HepG2 (cell line): ENCODE measurements at regions of chr2 and their contacts with region 1.

Region 1: GRCh38 chr2:17470855-17471641 is 47.2 kb downstream of the RAD51AP2 start:
- DNase-seq: peak; percentile 71
- ATAC-seq: peak; percentile 99
- H3K4me3 ChIP-seq: no peak overlapping the region
- H3K27ac ChIP-seq: no peak overlapping the region
- H3K4me1 ChIP-seq: peaks cover 6% of the 10 kb centered on the region; the same call in 1 of the 2 replicates
- H3K27me3 ChIP-seq: no peaks in the 10 kb centered on the region
- CTCF ChIP-seq: peak; percentile 88
- EP300 ChIP-seq: no peak
- POLR2A ChIP-seq: no peak
- RAD21 ChIP-seq: peak; percentile 87

Region 2: DNA sequence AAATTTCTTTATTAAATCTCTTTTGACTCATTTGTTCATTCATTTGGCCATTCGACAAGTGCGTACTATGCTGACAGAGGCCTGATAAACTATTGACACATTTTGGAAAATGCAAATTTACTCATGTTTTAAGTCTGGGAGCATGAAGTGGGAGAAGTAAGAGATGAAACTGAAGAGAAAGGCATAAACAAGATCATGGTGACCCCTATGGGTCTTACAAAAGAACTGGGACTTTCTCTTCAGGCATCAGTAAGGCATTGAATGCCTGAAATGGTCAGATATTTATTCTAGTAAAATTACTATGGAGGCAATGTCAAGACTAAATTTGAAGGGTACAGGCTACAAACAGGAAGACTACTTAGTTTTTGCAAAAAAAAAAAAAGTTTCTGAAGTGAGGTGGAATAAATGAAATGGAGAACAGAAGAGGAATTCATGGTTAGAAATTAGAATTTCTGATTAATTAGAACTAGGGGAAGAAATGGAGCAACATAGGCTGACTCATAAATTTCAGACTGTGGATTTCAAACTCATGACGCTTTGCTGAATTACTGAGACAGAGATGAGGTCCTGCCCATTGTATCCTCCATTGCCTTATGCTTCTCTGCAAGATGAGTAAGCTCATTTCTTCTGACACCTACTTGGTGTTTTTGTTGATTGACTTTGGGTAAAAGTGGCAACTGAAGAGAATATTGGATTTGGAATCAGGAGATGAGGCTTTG is 102.2 kb after region 1 on chr2:
- CTCF ChIA-PET with region 1: interaction called, 9 read pairs
- POLR2A ChIA-PET with region 1: no interaction called
- in situ Hi-C with region 1: loop called (anchors 5 kb)
- intact Hi-C with region 1: loop called (anchors 1 kb)
- DNase-seq: peak; percentile 52
- ATAC-seq: peak; percentile 87
- H3K4me3 ChIP-seq: no peak overlapping the region
- H3K27ac ChIP-seq: no peak overlapping the region
- H3K4me1 ChIP-seq: peaks cover 40% of the 10 kb centered on the region
- H3K27me3 ChIP-seq: no peaks in the 10 kb centered on the region
- CTCF ChIP-seq: peak; percentile 68
- EP300 ChIP-seq: no peak
- POLR2A ChIP-seq: no peak
- RAD21 ChIP-seq: peak; percentile 66; the same call in 1 of the 2 replicates

Region 3: DNA sequence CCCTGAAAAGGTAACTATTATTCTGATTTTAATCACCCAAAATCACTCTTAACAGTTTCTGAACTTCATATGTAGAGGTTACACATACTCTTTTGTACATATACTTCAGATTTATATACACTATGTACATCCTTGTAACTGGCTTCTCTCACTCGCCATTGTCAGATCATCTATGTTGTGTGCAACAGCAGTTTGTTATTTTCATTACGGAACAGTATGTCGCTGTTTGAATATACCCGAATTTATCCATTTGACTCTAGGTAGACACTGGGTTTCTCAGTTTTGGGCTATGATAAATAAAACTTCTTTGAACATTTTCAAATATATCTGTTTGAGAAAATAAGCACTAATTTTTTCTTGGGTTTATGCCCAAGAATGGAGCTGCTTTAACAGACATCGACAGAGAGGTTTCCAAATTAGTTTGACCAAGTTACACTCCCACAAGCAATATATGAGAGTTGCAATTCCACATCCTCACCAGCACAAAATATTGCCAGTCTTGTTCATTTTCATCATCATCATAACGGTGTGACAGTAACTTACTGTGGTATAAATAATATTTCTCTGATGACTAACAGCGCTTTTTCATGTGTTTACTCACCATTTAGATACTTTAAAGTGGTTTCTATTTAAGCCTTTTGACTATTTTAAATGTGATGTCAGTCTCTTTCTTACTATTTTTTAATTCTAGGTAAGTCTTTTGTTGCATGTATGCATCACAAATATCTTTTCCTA is 201.7 kb after region 1 on chr2:
- CTCF ChIA-PET with region 1: interaction called, 61 read pairs
- POLR2A ChIA-PET with region 1: no interaction called
- in situ Hi-C with region 1: loop called (anchors 5 kb)
- intact Hi-C with region 1: loop called (anchors 1 kb)
- DNase-seq: no peak
- ATAC-seq: no peak; the same call in 2 of the 3 replicates
- H3K4me3 ChIP-seq: no peak overlapping the region
- H3K27ac ChIP-seq: no peak overlapping the region
- H3K4me1 ChIP-seq: no peaks in the 10 kb centered on the region
- H3K27me3 ChIP-seq: no peaks in the 10 kb centered on the region
- CTCF ChIP-seq: no peak
- EP300 ChIP-seq: no peak
- POLR2A ChIP-seq: no peak
- RAD21 ChIP-seq: no peak